OCI-LY7 (cell line): ENCODE measurements at regions of chr4 and their contacts with region 1.

Region 1: GRCh38 chr4:113636438-113636818 is 125.1 kb downstream of the CAMK2D start:
- DNase-seq: peak; percentile 84
- H3K4me3 ChIP-seq: peak overlapping the region; percentile 55
- H3K27ac ChIP-seq: peak overlapping the region; percentile 93
- H3K4me1 ChIP-seq: peaks cover 69% of the 10 kb centered on the region
- CTCF ChIP-seq: peak; percentile 72

Region 2: GRCh38 chr4:113547487-113548042 is 88.9 kb before region 1 on chr4:
- CTCF ChIA-PET with region 1: interaction called, 3 read pairs
- POLR2A ChIA-PET with region 1: interaction called, 3 read pairs
- intact Hi-C with region 1: loop called (anchors 1 kb)
- DNase-seq: peak; percentile 95
- H3K4me3 ChIP-seq: no peak overlapping the region
- H3K27ac ChIP-seq: peak overlapping the region; percentile 60
- H3K4me1 ChIP-seq: peaks cover 25% of the 10 kb centered on the region
- CTCF ChIP-seq: peak; percentile 97

Region 3: GRCh38 chr4:113574636-113575103 is 61.8 kb before region 1 on chr4:
- CTCF ChIA-PET with region 1: no interaction called
- POLR2A ChIA-PET with region 1: interaction called, 12 read pairs
- intact Hi-C with region 1: no loop called
- DNase-seq: peak; percentile 31
- H3K4me3 ChIP-seq: peak overlapping the region; percentile 47
- H3K27ac ChIP-seq: peak overlapping the region; percentile 77
- H3K4me1 ChIP-seq: peaks cover 95% of the 10 kb centered on the region
- CTCF ChIP-seq: no peak

Region 4: DNA sequence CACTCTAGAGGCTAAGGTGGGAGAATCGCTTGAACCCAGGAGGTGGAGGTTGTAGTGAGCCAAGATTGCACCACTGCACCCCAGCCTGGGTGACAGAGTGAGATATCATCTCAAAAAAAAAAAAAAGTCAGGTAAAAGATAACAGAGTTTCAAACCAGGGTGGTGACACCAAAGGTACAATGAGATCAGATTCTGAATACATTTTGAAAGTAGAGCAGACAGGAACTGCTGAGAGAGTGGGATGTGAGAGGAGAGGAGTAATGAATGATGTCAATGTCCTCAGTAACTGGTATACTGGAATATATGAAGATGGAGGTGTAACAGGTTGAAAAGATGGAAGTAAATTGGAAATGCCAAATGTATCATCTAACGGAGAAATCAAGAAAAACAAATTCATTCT is 10.5 kb before region 1 on chr4:
- CTCF ChIA-PET with region 1: no interaction called
- POLR2A ChIA-PET with region 1: interaction called, 28 read pairs
- intact Hi-C with region 1: no loop called
- DNase-seq: no peak
- H3K4me3 ChIP-seq: no peak overlapping the region
- H3K27ac ChIP-seq: no peak overlapping the region
- H3K4me1 ChIP-seq: peaks cover 35% of the 10 kb centered on the region
- CTCF ChIP-seq: no peak

Region 5: DNA sequence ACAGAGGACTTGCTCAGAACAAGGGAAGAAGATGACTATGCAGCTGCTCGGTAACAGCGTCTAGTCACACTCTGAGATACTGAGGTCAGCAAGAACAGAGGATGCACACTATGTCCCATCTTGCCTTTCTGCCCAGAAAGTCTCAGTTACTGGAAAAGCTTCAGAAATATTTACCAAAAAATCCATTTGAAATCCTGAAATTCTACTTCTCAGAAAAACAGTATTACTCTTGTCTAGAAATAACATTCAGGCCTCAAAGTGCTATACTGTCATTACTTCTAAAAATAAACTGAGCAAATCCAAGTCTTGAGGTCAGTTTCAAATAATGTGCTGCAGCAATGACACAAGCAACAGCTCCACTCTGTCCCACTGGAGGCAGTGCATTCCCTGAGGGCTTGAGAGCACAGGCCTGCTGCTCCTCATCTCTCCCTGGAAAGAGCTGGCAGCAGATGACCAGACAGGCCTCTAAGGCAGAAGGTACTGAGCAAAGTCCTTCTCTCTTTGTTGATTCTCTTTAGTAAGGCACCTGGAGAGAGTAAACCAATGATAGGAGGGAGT is 48.2 kb after region 1 on chr4:
- CTCF ChIA-PET with region 1: no interaction called
- POLR2A ChIA-PET with region 1: interaction called, 64 read pairs
- intact Hi-C with region 1: loop called (anchors 2 kb)
- DNase-seq: peak; percentile 34
- H3K4me3 ChIP-seq: no peak overlapping the region
- H3K27ac ChIP-seq: peak overlapping the region; percentile 89
- H3K4me1 ChIP-seq: peaks cover 52% of the 10 kb centered on the region
- CTCF ChIP-seq: peak; percentile 47; the same call in 1 of the 2 replicates